ENCODE measurements at regions of chr2 and their contacts with region 1.

Region 1: GRCh38 chr2:99559075-99559662 is 69.4 kb upstream of the REV1 start:
- DNase-seq: peak; percentile 95
- H3K4me3 ChIP-seq: no peak overlapping the region
- H3K27ac ChIP-seq: no peak overlapping the region
- H3K4me1 ChIP-seq: no peaks in the 10 kb centered on the region
- H3K27me3 ChIP-seq: no peaks in the 10 kb centered on the region
- CTCF ChIP-seq: peak; percentile 95 to 100 (median 98)
- POLR2A ChIP-seq: no peak

Region 2: DNA sequence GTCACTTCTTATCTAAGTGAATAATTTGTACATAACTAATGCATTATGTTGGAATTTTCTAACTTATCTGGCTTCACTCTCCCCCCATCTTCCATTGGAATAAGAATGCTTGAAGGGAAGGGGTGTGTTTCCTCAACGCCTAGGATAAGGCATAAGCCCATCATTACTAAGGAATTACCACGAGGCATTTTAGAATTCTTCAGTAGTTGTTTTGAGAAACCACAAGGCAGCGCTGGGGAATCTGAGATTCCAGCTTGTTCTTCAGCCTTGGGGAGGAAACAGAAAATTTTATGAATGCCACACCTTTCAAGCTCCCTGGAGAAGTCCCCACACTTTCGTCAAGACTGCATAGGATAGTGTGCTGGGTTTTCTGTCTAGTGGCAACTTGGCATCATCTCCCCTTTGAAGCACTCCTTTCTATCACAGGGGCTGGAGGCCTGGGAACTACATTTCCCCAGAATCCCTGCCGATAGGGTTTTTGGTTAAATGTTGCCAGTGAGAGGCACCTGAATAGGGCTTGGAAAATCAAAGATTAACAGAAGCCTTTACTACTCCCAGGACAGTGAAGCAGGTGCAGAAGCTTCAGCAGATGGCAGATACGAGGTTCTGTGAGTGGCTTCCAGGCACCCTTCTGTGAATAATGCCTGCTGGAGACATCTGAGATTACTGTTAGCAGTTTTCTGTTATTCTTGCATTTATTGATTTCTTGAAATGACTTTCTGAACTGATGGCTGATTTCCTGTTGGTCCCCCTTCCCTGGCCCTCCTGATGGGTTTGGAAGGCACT is 123.3 kb after region 1 on chr2:
- intact Hi-C with region 1: no loop called
- DNase-seq: no peak
- H3K4me3 ChIP-seq: no peak overlapping the region
- H3K27ac ChIP-seq: no peak overlapping the region
- H3K4me1 ChIP-seq: no peaks in the 10 kb centered on the region
- H3K27me3 ChIP-seq: no peaks in the 10 kb centered on the region
- CTCF ChIP-seq: no peak
- POLR2A ChIP-seq: no peak

Region 3: DNA sequence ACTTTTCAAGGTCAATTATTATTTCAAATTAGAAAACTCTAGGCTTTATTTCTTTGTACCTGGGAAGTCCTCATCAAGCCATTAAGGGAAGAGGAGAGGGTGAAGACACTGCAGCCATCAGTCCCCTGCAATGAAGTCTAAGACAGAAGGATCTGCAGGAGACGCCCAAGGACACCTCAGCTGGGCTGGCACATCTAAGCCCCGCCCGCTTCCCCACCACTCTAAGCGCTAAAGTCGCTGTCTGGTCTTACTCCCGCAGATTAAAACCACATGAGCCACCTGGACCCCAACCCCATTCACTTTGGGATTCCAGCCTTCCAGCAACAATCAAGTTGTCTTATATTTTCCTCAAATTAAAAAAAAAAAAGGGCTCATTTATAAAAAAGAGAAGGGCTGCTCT is 478.9 kb after region 1 on chr2:
- intact Hi-C with region 1: no loop called
- DNase-seq: no peak
- H3K4me3 ChIP-seq: no peak overlapping the region
- H3K27ac ChIP-seq: no peak overlapping the region
- H3K4me1 ChIP-seq: peaks cover 3% of the 10 kb centered on the region
- H3K27me3 ChIP-seq: no peaks in the 10 kb centered on the region
- CTCF ChIP-seq: no peak
- POLR2A ChIP-seq: no peak

Region 4: GRCh38 chr2:100246163-100247145 is 687.3 kb after region 1 on chr2:
- intact Hi-C with region 1: loop called (anchors 5 kb)
- DNase-seq: no peak
- H3K4me3 ChIP-seq: no peak overlapping the region
- H3K27ac ChIP-seq: no peak overlapping the region
- H3K4me1 ChIP-seq: peaks cover 6% of the 10 kb centered on the region
- H3K27me3 ChIP-seq: no peaks in the 10 kb centered on the region
- CTCF ChIP-seq: peak in 2 of 3 experiments; percentile 34 to 45
- POLR2A ChIP-seq: no peak

Measured in testis (tissue), 5 donors.